GM12878 (cell line): ENCODE measurements at regions of chr10 and their contacts with region 1.

Region 1: GRCh38 chr10:123807444-123808035 is 84.1 kb downstream of the CPXM2 start:
- DNase-seq: no peak
- ATAC-seq: no peak
- H3K4me3 ChIP-seq: no peak overlapping the region
- H3K27ac ChIP-seq: no peak overlapping the region
- H3K4me1 ChIP-seq: no peaks in the 10 kb centered on the region
- H3K27me3 ChIP-seq: peaks cover 0 to 3% of the 10 kb centered on the region in 2 experiments; a peak in 1 of 4 replicates
- CTCF ChIP-seq: no peak
- EP300 ChIP-seq: no peak
- POLR2A ChIP-seq: no peak
- RAD21 ChIP-seq: no peak

Region 2: GRCh38 chr10:123790132-123790885 is 17.2 kb before region 1 on chr10:
- CTCF ChIA-PET with region 1: interaction called, 10 read pairs
- POLR2A ChIA-PET with region 1: interaction called, 11 read pairs
- RAD21 ChIA-PET with region 1: no interaction called
- SMC1A ChIA-PET with region 1: interaction called, 5 read pairs
- in situ Hi-C with region 1: no loop called
- intact Hi-C with region 1: no loop called
- DNase-seq: no peak
- ATAC-seq: no peak
- H3K4me3 ChIP-seq: no peak overlapping the region
- H3K27ac ChIP-seq: no peak overlapping the region
- H3K4me1 ChIP-seq: no peaks in the 10 kb centered on the region
- H3K27me3 ChIP-seq: no peaks in the 10 kb centered on the region; a peak in 1 of 4 replicates
- CTCF ChIP-seq: no peak
- EP300 ChIP-seq: no peak
- POLR2A ChIP-seq: no peak
- RAD21 ChIP-seq: no peak

Region 3: DNA sequence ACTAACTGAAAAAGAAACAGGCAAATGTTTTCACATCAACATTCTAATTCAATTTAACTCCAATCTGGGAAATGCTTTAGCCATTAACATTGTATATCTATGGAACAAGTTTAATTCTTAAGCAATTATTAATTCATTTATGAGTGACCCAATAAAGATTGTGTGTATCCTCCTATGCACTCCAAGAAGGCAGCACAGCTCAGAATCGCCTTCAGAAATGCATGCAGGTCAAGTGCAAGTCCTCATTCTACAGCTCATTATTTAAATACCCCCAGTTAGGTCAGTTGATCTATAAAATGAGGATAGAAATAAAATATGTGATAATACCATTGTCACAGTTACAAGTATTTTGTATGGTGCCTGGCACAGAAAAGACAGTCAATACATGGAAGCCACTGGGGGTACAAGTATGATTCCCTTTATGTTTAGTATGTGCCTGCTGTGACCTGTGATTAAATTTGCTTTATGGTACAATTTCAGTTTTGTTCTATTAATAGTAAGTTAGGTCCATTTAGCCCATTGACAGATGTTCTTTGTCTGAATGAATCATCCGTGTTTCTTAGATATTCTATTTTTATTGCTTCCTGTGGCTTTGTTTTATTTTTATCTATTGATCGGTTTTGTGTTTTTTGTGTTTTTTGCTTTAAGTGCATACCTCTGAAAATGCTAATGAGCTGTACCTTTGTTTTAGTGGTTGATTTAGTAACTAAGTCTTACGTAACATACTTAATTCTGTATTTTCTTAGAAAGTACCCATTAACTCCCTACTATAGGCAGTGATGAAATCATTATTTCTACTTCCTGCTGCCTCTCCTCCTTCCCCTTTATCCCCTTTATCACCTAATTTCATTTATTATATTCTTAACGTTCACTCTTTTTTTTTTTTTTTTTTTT is 41.3 kb after region 1 on chr10:
- CTCF ChIA-PET with region 1: no interaction called
- POLR2A ChIA-PET with region 1: no interaction called
- RAD21 ChIA-PET with region 1: interaction called, 3 read pairs
- SMC1A ChIA-PET with region 1: interaction called, 10 read pairs
- in situ Hi-C with region 1: no loop called
- intact Hi-C with region 1: no loop called
- DNase-seq: peak; percentile 63
- ATAC-seq: peak; percentile 86
- H3K4me3 ChIP-seq: no peak overlapping the region
- H3K27ac ChIP-seq: peak overlapping the region; percentile 39; the same call in 1 of the 2 replicates
- H3K4me1 ChIP-seq: peaks cover 3% of the 10 kb centered on the region; the same call in 1 of the 2 replicates
- H3K27me3 ChIP-seq: no peaks in the 10 kb centered on the region
- CTCF ChIP-seq: no peak
- EP300 ChIP-seq: peak; percentile 78 to 92
- POLR2A ChIP-seq: no peak
- RAD21 ChIP-seq: no peak